Activated CD4-positive, alpha-beta T cell treated with anti-CD3 and anti-CD28 coated beads for 36 hours (primary cell): ENCODE measurements at regions of chr1 and their contacts with region 1.

Region 1: GRCh38 chr1:42035830-42036604 is 117.2 kb upstream of the GUCA2B start:
- DNase-seq: peak; percentile 99
- ATAC-seq: peak; percentile 92
- H3K4me3 Mint-ChIP-seq: peak overlapping the region; percentile 76
- H3K27ac Mint-ChIP-seq: peak overlapping the region; percentile 72
- H3K4me1 Mint-ChIP-seq: peaks cover 35% of the 10 kb centered on the region
- H3K27me3 Mint-ChIP-seq: no peaks in the 10 kb centered on the region

Region 2: GRCh38 chr1:41360993-41361753 is 674.8 kb before region 1 on chr1 and contains the start of gene FOXO6:
- CTCF ChIA-PET with region 1: no interaction called
- POLR2A ChIA-PET with region 1: no interaction called
- intact Hi-C with region 1: loop called in 1 of 2 experiments (anchors 5 kb)
- DNase-seq: peak; percentile 96
- ATAC-seq: peak; percentile 96
- H3K4me3 Mint-ChIP-seq: peak within 1 kb of the TSS; percentile 49
- H3K27ac Mint-ChIP-seq: no peak within 1 kb of the TSS
- H3K4me1 Mint-ChIP-seq: peaks cover 10% of the 10 kb centered on the region
- H3K27me3 Mint-ChIP-seq: peaks cover 24% of the 10 kb centered on the region
- total RNA-seq, gene FOXO6: 0.09 TPM in 1 of 2 experiments, not detected in the other

Region 3: GRCh38 chr1:41662061-41662764 is 373.8 kb before region 1 on chr1:
- CTCF ChIA-PET with region 1: no interaction called
- POLR2A ChIA-PET with region 1: no interaction called
- intact Hi-C with region 1: loop called in 1 of 2 experiments (anchors 2 kb)
- DNase-seq: peak; percentile 87
- ATAC-seq: peak; percentile 68
- H3K4me3 Mint-ChIP-seq: peak overlapping the region; percentile 97
- H3K27ac Mint-ChIP-seq: no peak overlapping the region
- H3K4me1 Mint-ChIP-seq: peaks cover 79% of the 10 kb centered on the region
- H3K27me3 Mint-ChIP-seq: no peaks in the 10 kb centered on the region

Region 4: DNA sequence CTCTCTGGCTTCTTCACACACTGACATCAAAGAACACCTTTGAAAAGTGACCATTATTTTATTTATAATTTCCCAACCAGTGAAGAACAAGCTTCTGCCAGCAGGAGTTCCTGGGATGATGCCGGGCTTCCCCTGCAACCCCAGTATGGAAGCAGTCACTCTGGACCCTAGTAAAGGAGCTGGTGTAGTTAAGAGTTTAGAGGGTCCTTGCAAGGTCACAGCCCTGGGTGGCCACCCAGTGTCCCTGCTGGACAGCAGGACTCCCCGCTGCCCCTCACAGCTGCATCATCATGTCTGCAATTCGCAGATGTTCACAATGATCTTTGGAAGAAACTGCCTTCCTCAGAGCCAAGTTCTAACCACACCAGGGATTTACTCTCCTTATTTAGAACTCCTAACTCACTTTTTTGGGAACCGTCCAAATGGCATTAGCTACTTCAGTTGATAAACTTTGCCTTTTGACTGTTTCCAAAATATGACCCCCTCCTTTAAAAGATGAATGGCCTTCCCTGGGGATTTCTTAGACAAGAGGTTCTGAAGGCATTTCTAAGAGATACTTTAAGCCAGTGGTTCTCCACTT is 207.9 kb before region 1 on chr1:
- CTCF ChIA-PET with region 1: no interaction called
- POLR2A ChIA-PET with region 1: no interaction called
- intact Hi-C with region 1: no loop called
- DNase-seq: no peak
- ATAC-seq: no peak
- H3K4me3 Mint-ChIP-seq: no peak overlapping the region
- H3K27ac Mint-ChIP-seq: no peak overlapping the region
- H3K4me1 Mint-ChIP-seq: no peaks in the 10 kb centered on the region
- H3K27me3 Mint-ChIP-seq: no peaks in the 10 kb centered on the region

Region 5: DNA sequence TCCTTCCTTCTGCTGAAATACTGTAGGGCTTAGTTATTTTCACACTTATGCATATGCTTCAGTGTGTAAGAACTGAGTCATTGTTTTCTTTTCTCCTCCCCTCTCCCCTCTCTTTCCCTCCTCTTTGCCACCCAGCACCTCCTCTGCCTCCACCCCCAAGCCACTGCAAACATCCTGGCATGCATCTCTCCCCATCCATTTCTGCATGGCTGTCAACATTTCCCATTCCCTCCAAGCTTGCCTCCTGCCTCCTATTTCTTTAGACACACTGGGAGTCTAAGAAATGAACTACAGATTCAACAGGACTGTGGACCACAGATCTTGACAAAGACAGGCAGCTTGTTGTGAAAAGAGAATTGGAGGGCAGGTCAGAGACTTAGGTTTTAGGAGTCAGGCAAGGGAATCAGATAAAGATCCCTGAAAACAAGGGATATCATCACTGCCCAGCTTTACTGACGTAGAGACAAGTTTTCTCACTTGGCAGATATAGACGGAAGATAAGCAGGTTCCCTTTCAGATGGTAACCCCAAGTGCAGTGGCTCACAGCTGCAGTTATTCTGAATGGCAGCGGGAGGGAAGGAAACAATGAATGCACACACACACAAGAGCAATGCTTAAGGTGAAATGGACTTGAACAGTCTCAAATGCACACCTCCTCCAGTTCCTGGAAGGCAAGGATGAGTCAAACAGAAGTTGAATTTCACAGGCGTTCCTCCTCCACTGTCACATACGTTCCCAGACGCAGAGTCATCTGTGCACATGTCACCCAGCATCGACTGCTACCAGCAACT is 173.4 kb before region 1 on chr1:
- CTCF ChIA-PET with region 1: no interaction called
- POLR2A ChIA-PET with region 1: no interaction called
- intact Hi-C with region 1: loop called (anchors 1 to 5 kb)
- DNase-seq: peak; percentile 83
- ATAC-seq: peak; percentile 93
- H3K4me3 Mint-ChIP-seq: peak overlapping the region; percentile 9
- H3K27ac Mint-ChIP-seq: peak overlapping the region; percentile 84
- H3K4me1 Mint-ChIP-seq: peaks cover 41% of the 10 kb centered on the region
- H3K27me3 Mint-ChIP-seq: no peaks in the 10 kb centered on the region

Region 6: DNA sequence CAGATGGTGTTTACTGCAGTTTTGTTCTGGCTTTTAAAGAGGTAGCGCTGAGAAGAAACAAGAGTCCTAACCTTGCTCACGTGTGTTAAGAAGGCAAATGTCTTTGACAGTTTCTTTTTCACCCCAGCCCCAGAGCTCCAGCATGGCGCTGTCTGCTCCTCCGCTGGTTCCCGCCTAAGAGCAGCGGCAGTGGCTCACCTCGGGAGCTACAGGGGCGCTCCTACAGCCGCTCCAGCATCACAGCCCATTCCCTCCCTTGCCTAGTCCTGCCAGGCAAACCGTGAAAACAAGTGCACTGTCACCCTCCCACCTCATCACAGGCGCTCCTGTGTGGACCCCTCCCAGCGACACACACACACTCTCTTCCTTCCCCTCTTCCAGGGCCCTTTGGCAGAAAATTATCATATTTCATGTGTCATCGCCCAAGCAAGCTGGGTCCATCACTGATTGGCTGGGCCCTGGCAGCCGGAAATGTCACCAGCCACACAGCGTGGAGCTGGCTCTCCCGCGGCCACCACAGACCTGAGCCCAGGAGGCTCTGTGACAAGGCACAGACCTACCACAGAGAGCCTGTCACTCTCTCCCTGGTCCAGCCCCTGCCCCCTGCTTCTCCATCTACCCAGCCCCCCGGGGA is 116.1 kb before region 1 on chr1:
- CTCF ChIA-PET with region 1: interaction called, 3 read pairs
- POLR2A ChIA-PET with region 1: interaction called, 3 read pairs
- intact Hi-C with region 1: loop called (anchors 1 to 5 kb)
- DNase-seq: peak; percentile 92
- ATAC-seq: peak; percentile 92
- H3K4me3 Mint-ChIP-seq: peak overlapping the region; percentile 72
- H3K27ac Mint-ChIP-seq: peak overlapping the region; percentile 88
- H3K4me1 Mint-ChIP-seq: peaks cover 57% of the 10 kb centered on the region
- H3K27me3 Mint-ChIP-seq: no peaks in the 10 kb centered on the region

Region 7: GRCh38 chr1:42766741-42767509 is 730.9 kb after region 1 on chr1 and contains the starts of genes C1orf50 and P3H1:
- CTCF ChIA-PET with region 1: no interaction called
- POLR2A ChIA-PET with region 1: no interaction called
- intact Hi-C with region 1: loop called in 1 of 2 experiments (anchors 2 kb)
- DNase-seq: peak; percentile 100
- ATAC-seq: peak; percentile 96
- H3K4me3 Mint-ChIP-seq: no peak within 1 kb of the TSS
- H3K27ac Mint-ChIP-seq: peak within 1 kb of the TSS; percentile 85
- H3K4me1 Mint-ChIP-seq: peaks cover 36% of the 10 kb centered on the region
- H3K27me3 Mint-ChIP-seq: no peaks in the 10 kb centered on the region
- total RNA-seq, gene C1orf50: 4.0 to 8.0 TPM
- total RNA-seq, gene P3H1: 24.3 to 28.8 TPM